HEK293 (cell line): ENCODE measurements at regions of chr22 and their contacts with region 1.

Region 1: GRCh38 chr22:35539910-35540594 is 579 bp upstream of the RASD2 start:
- H3K4me3 ChIP-seq: peak overlapping the region; percentile 56
- H3K27ac ChIP-seq: peak overlapping the region; percentile 28; the same call in 1 of the 2 replicates
- H3K4me1 ChIP-seq: no peaks in the 10 kb centered on the region; the same call in 1 of the 2 replicates
- CTCF ChIP-seq: no peak

Region 2: DNA sequence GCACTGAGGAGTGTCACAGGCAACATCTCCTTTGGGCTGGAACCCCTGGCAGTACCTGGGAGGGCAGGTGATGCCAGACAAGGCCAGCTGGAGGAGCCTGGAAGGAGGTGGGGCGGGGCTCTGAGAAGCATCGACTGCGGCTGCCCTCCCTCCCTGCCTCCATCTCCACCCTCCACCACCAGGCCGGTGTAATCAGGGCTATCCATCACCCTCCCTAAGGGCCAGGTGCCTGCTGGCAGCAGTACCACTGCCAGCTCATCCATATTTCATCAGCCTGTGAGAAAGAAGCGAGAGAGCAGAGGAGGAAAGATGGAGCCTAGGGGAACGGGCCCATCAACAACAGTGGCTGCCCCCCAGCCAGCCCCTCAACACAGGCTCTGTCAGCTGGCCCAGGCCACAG is 50.8 kb before region 1 on chr22:
- CTCF ChIA-PET with region 1: no interaction called
- POLR2A ChIA-PET with region 1: no interaction called
- H3K4me3 ChIP-seq: no peak overlapping the region
- H3K27ac ChIP-seq: no peak overlapping the region
- H3K4me1 ChIP-seq: no peaks in the 10 kb centered on the region
- CTCF ChIP-seq: no peak

Region 3: DNA sequence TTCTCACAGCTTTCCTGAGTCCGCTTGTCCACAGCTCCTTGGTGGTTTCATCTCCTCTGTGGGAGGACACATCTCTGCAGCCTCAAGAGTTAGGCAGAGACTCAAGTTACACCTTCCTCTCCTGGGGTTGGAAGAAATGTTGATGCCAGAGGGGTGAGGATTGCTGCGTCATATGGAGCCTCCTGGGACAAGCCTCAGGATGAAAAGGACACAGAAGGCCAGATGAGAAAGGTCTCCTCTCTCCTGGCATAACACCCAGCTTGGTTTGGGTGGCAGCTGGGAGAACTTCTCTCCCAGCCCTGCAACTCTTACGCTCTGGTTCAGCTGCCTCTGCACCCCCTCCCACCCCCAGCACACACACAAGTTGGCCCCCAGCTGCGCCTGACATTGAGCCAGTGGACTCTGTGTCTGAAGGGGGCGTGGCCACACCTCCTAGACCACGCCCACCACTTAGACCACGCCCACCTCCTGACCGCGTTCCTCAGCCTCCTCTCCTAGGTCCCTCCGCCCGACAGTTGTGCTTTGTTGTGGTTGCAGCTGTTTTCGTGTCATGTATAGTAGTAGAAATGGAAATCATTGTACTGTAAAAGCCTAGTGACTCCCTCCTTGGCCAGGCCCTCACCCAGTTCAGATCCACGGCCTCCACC is 12.3 kb after region 1 on chr22:
- CTCF ChIA-PET with region 1: interaction called, 26 read pairs
- POLR2A ChIA-PET with region 1: interaction called, 11 read pairs
- H3K4me3 ChIP-seq: no peak overlapping the region
- H3K27ac ChIP-seq: no peak overlapping the region
- H3K4me1 ChIP-seq: no peaks in the 10 kb centered on the region; the same call in 1 of the 2 replicates
- CTCF ChIP-seq: no peak

Region 4: GRCh38 chr22:36055376-36056295 is 515.6 kb after region 1 on chr22:
- CTCF ChIA-PET with region 1: no interaction called
- POLR2A ChIA-PET with region 1: no interaction called
- H3K4me3 ChIP-seq: no peak overlapping the region
- H3K27ac ChIP-seq: no peak overlapping the region
- H3K4me1 ChIP-seq: 0 out of 2 replicates have a peak, but pooled peaks cover 3% of the 10 kb centered on the region
- CTCF ChIP-seq: no peak